ENCODE measurements at regions of chr14 and their contacts with region 1.

Region 1: GRCh38 chr14:88385345-88386101 is at the start of gene SPATA7:
- DNase-seq: peak; percentile 95 to 97 (median 96)
- ATAC-seq: peak; percentile 98 to 100 (median 100)
- H3K4me3 ChIP-seq: peak within 1 kb of the TSS; percentile 48 to 97 (median 78)
- H3K27ac ChIP-seq: peak within 1 kb of the TSS in 11 of 12 donors; percentile 71 to 94 (median 80)
- H3K4me1 ChIP-seq: peaks cover 0 to 21% (median 12%) of the 10 kb centered on the region in 12 donors
- H3K27me3 ChIP-seq: no peaks in the 10 kb centered on the region
- CTCF ChIP-seq: no peak
- POLR2A ChIP-seq: peak in 1 of 2 donors; percentile 78
- total RNA-seq, gene SPATA7: 5.5 to 15.1 (median 9.2) TPM

Region 2: DNA sequence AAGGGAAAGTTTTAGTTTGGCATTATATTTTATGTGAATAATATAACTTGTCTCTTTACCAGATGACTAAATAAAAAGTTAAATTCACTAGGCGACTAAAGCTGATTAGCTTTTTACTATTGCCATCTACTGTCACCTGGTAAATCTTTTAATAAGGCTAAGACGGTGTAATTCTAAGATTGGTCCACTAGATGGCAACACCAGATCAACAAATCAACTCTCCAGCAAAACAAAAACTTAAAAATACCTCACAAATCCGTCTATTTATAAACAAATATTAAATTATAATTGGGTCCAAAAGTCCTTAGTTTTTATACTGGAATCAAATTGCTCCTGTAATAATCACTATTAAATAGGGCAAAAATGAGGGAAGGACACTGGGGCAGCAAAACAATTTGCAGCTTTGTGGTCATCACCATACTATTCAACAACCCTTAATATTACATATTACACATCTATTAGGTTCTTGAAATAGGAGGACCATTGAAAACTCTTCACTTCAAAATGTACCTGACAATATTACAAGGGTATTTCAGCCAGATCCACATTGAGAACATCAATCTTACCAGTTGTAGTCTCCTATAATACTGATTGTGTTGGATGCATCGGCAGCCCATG is 440.4 kb before region 1 on chr14:
- intact Hi-C with region 1: loop called in 1 of 10 experiments (anchors 10 kb)
- DNase-seq: no peak
- ATAC-seq: no peak
- H3K4me3 ChIP-seq: no peak overlapping the region
- H3K27ac ChIP-seq: no peak overlapping the region
- H3K4me1 ChIP-seq: no peaks in the 10 kb centered on the region
- H3K27me3 ChIP-seq: no peaks in the 10 kb centered on the region
- CTCF ChIP-seq: peak; percentile 58 to 76 (median 66)
- POLR2A ChIP-seq: no peak

Region 3: GRCh38 chr14:88013750-88014349 is 371.7 kb before region 1 on chr14:
- intact Hi-C with region 1: loop called in 4 of 10 experiments (anchors 5 to 10 kb)
- DNase-seq: peak in 4 of 5 donors; percentile 63 to 69 (median 66)
- ATAC-seq: peak; percentile 92 to 95 (median 95)
- H3K4me3 ChIP-seq: peak overlapping the region in 1 of 12 donors; percentile 12
- H3K27ac ChIP-seq: peak overlapping the region in 1 of 12 donors; percentile 59
- H3K4me1 ChIP-seq: peaks cover 0 to 63% (median 0%) of the 10 kb centered on the region in 12 donors
- H3K27me3 ChIP-seq: no peaks in the 10 kb centered on the region
- CTCF ChIP-seq: peak; percentile 76 to 96 (median 90)
- POLR2A ChIP-seq: no peak

Region 4: GRCh38 chr14:88189417-88190191 is 195.9 kb before region 1 on chr14:
- intact Hi-C with region 1: loop called (anchors 2 to 10 kb)
- DNase-seq: peak in 4 of 5 donors; percentile 37 to 71 (median 63)
- ATAC-seq: peak; percentile 93 to 98 (median 94)
- H3K4me3 ChIP-seq: peak overlapping the region in 9 of 12 donors; percentile 17 to 42 (median 22)
- H3K27ac ChIP-seq: no peak overlapping the region
- H3K4me1 ChIP-seq: peaks cover 0 to 9% (median 4%) of the 10 kb centered on the region in 12 donors
- H3K27me3 ChIP-seq: peaks cover 0 to 29% (median 16%) of the 10 kb centered on the region in 9 donors
- CTCF ChIP-seq: peak; percentile 46 to 81 (median 65)
- POLR2A ChIP-seq: no peak

Region 5: DNA sequence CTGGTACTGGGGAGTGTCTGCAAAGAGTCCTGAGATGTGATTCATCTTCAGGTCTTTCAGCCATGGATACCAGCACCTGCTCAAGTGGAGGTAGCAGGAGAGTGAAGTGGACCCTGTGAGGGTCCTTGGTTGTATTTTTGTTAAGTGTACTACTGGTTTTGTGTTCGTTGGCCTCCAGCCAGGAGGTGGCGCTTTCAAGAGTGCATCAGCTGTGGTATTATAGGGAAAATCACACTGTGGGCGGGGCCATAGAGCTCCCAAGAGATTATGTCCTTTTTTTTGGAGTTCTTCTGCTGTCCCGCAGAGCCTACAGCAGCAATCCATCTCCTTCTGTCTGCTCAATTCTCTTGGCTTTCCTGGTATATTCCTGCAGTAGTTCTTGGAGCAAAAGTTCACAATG is 66.7 kb after region 1 on chr14:
- intact Hi-C with region 1: no loop called
- DNase-seq: no peak
- ATAC-seq: no peak
- H3K4me3 ChIP-seq: no peak overlapping the region
- H3K27ac ChIP-seq: no peak overlapping the region
- H3K4me1 ChIP-seq: no peaks in the 10 kb centered on the region
- H3K27me3 ChIP-seq: no peaks in the 10 kb centered on the region
- CTCF ChIP-seq: no peak
- POLR2A ChIP-seq: no peak

Region 6: DNA sequence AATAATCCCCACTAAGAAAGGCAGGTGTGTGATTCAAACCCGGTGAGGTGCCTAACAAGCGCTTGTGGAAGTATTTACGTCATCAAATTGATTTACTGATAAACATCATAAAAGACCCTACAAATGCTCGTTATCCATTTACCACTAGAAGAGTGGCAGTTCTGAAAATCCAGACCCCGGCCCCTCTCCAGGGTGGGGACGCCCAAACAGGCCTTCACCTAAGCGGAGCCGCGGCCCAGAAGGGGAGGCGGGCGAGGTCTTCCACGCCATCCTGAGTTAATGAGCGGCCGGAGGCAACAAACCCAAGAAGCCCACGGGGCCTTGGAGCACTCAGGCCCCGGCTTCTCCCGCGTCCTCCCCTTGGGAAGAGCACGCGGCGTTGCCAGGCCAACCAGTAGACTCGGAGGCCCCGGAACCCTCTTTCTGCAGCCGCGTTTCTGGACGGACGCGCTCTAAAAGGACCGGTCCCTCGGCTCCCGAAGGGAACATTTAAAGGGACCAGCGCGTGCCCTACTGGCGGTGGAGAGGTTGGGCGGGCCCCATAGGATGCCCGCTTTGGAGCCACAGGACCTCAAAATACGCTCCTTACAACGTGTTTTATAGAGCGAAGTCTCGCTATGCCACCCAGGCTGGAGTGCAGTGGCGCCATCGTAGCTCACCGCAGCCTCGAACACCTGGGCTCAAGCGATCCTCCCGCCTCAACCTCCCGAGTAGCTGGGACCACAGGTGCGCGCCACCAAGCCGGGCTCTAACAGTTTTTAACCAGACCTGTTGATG is 165.8 kb after region 1 on chr14:
- intact Hi-C with region 1: loop called in 2 of 10 experiments (anchors 10 kb)
- DNase-seq: peak; percentile 81 to 86 (median 83)
- ATAC-seq: peak; percentile 81 to 87 (median 84)
- H3K4me3 ChIP-seq: peak overlapping the region; percentile 38 to 91 (median 74)
- H3K27ac ChIP-seq: peak overlapping the region in 11 of 12 donors; percentile 54 to 85 (median 77)
- H3K4me1 ChIP-seq: peaks cover 11 to 70% (median 47%) of the 10 kb centered on the region in 12 donors
- H3K27me3 ChIP-seq: peaks cover 0 to 54% (median 0%) of the 10 kb centered on the region in 9 donors
- CTCF ChIP-seq: peak in 9 of 12 donors; percentile 24 to 58 (median 42)
- POLR2A ChIP-seq: peak in 1 of 2 donors; percentile 29

Region 7: DNA sequence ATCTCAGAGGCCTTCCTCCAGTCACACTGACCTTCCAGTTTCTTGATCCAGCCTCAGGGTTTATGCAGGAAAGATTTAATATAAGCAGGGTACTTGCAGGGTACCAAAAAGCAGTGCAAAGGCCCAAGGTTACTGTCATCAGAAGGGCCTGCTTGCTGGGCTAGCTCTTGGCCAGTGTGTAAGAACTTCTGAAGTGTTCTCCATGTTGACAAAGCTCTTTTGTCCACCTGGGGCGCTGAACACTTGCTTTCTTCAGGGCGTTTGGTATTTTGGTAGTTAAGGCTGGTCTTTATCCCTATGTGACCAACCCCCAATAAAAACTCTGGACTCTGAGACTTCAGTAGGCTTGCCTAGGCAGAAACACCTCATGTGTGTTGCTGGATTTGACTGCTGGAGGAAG is 247.0 kb after region 1 on chr14:
- intact Hi-C with region 1: no loop called
- DNase-seq: no peak
- ATAC-seq: no peak
- H3K4me3 ChIP-seq: no peak overlapping the region
- H3K27ac ChIP-seq: no peak overlapping the region
- H3K4me1 ChIP-seq: no peaks in the 10 kb centered on the region
- H3K27me3 ChIP-seq: no peaks in the 10 kb centered on the region
- CTCF ChIP-seq: no peak
- POLR2A ChIP-seq: no peak

Region 8: GRCh38 chr14:89085737-89086382 is 700.3 kb after region 1 on chr14:
- intact Hi-C with region 1: no loop called
- DNase-seq: peak in 3 of 5 donors; percentile 45 to 57 (median 56)
- ATAC-seq: peak; percentile 74 to 89 (median 78)
- H3K4me3 ChIP-seq: peak overlapping the region in 2 of 12 donors; percentile 6 to 21
- H3K27ac ChIP-seq: peak overlapping the region in 4 of 12 donors; percentile 28 to 57 (median 42)
- H3K4me1 ChIP-seq: peaks cover 0 to 14% (median 3%) of the 10 kb centered on the region in 12 donors
- H3K27me3 ChIP-seq: no peaks in the 10 kb centered on the region
- CTCF ChIP-seq: no peak
- POLR2A ChIP-seq: no peak